Astrocyte of the cerebellum (primary cell): ENCODE measurements at regions of chr22 and their contacts with region 1.

Region 1: GRCh38 chr22:47996446-47996857 is 1234.0 kb downstream of the TBC1D22A start:
- DNase-seq: no peak
- H3K4me3 ChIP-seq: no peak overlapping the region
- CTCF ChIP-seq: no peak

Region 2: GRCh38 chr22:47957649-47958048 is 38.8 kb before region 1 on chr22:
- in situ Hi-C with region 1: loop called (anchors 5 kb)
- DNase-seq: no peak
- H3K4me3 ChIP-seq: no peak overlapping the region
- CTCF ChIP-seq: no peak